Activated CD4-positive, alpha-beta T cell treated with anti-CD3 and anti-CD28 coated beads for 36 hours (primary cell): ENCODE measurements at regions of chr5 and their contacts with region 1.

Region 1: DNA sequence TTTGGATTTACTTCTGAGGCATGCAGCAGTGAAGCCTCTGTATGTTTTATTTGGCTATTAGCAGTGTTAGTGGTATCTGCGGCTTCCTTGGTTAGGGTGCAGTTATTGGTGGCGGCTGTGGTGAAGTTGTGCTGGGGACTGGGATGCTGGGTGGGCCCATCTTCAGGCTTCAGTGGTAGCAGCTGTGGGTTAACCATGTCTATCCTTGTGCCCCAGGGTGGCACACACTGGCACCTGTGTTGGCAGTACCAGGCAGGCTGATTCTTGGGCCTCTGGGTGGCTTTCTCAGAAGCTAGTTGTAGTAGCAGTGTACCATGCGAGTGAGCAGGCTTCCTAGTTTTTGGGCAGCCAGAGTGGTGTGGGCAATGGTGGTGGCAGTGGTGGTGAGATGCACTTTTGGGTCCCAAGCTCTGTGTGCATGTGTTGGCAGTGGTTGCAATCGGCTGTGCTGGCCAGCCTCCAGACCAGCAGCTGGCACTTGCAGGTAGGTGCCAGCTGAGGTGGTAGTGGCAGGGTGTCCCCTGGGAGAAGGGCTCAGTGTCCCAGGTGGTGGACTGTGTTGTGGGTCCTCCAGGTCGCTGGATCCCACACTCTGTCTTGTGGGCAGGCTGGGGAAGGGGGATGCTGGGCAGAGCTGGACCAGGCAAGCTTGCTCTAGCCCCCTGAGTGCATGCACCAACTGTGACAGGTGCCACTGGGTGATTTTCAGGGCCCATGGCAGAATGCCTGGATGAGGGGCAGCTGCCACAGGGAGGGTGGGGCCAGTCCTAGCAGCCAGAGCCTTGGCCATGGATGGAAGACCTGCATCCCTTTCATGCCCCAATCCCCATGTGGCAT is 13.6 kb downstream of the AHRR start:
- DNase-seq: no peak
- ATAC-seq: no peak
- H3K4me3 Mint-ChIP-seq: peak overlapping the region; percentile 55
- H3K27ac Mint-ChIP-seq: peak overlapping the region; percentile 92
- H3K4me1 Mint-ChIP-seq: peaks cover 46% of the 10 kb centered on the region
- H3K27me3 Mint-ChIP-seq: peaks cover 4% of the 10 kb centered on the region

Region 2: GRCh38 chr5:206406-206805 is 128.7 kb before region 1 on chr5:
- CTCF ChIA-PET with region 1: no interaction called
- POLR2A ChIA-PET with region 1: no interaction called
- intact Hi-C with region 1: no loop called
- DNase-seq: no peak
- ATAC-seq: no peak
- H3K4me3 Mint-ChIP-seq: no peak overlapping the region
- H3K27ac Mint-ChIP-seq: no peak overlapping the region
- H3K4me1 Mint-ChIP-seq: peaks cover 17% of the 10 kb centered on the region
- H3K27me3 Mint-ChIP-seq: no peaks in the 10 kb centered on the region

Region 3: GRCh38 chr5:270340-270739 is 64.8 kb before region 1 on chr5:
- CTCF ChIA-PET with region 1: no interaction called
- POLR2A ChIA-PET with region 1: no interaction called
- intact Hi-C with region 1: loop called in 1 of 2 experiments (anchors 1 kb)
- DNase-seq: no peak
- ATAC-seq: no peak
- H3K4me3 Mint-ChIP-seq: peak overlapping the region; percentile 95
- H3K27ac Mint-ChIP-seq: peak overlapping the region; percentile 47
- H3K4me1 Mint-ChIP-seq: peaks cover 41% of the 10 kb centered on the region
- H3K27me3 Mint-ChIP-seq: no peaks in the 10 kb centered on the region

Region 4: DNA sequence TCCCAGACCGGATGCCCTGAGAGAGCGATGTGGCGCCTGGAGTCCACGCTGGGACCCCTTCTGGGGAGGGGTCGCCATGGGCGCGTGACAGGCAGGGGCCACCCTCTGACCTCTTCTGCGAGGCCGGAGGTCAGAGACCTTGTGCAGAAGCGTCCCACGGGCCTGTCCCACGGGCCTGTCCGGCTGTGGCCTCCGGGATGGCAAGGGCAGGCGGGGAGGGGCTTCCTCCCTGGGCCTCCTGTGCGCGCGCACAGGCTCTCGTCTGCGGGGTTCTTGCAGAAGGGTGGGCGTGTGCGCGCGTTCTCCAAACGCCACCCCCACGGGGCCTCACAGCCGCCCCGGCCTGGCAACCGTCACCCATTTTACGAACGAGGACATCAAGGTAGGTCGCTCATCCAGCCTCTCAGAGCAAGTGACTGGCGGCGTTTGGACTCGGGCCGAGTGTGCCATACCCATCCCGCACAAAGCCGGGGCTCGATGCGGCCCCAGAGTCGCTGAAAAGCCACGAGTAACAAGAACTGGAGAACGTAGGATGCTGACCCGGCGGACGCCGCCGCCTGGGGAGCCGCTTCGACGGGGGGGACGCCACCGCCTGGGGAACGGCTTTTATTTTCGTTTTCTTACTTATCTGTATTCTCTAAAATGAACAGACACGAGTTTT is 12.7 kb before region 1 on chr5:
- CTCF ChIA-PET with region 1: no interaction called
- POLR2A ChIA-PET with region 1: no interaction called
- intact Hi-C with region 1: loop called in 1 of 2 experiments (anchors 1 kb)
- DNase-seq: peak; percentile 44
- ATAC-seq: peak; percentile 11
- H3K4me3 Mint-ChIP-seq: peak overlapping the region; percentile 64
- H3K27ac Mint-ChIP-seq: no peak overlapping the region
- H3K4me1 Mint-ChIP-seq: peaks cover 10% of the 10 kb centered on the region
- H3K27me3 Mint-ChIP-seq: peaks cover 22% of the 10 kb centered on the region

Region 5: GRCh38 chr5:373710-374602 is 38.8 kb after region 1 on chr5:
- CTCF ChIA-PET with region 1: interaction called, 3 read pairs
- POLR2A ChIA-PET with region 1: no interaction called
- intact Hi-C with region 1: loop called (anchors 2 kb)
- DNase-seq: peak; percentile 88
- ATAC-seq: peak; percentile 37
- H3K4me3 Mint-ChIP-seq: peak overlapping the region; percentile 62
- H3K27ac Mint-ChIP-seq: peak overlapping the region; percentile 94
- H3K4me1 Mint-ChIP-seq: peaks cover 69% of the 10 kb centered on the region
- H3K27me3 Mint-ChIP-seq: no peaks in the 10 kb centered on the region